Stomach (tissue), 19 donors: ENCODE measurements at regions of chr1 and their contacts with region 1.

Region 1: GRCh38 chr1:183023601-183024316 is 539 bp downstream of the LAMC1 start:
- DNase-seq: peak; percentile 85 to 92
- H3K4me3 ChIP-seq: peak overlapping the region; percentile 69 to 87 (median 80)
- H3K27ac ChIP-seq: peak overlapping the region; percentile 99 to 100 (median 99)
- H3K4me1 ChIP-seq: peaks cover 13 to 77% (median 46%) of the 10 kb centered on the region in 4 donors
- H3K27me3 ChIP-seq: peaks cover 0 to 8% (median 0%) of the 10 kb centered on the region in 3 donors
- CTCF ChIP-seq: peak in 4 of 7 experiments; percentile 45 to 80 (median 57)
- EP300 ChIP-seq: no peak
- POLR2A ChIP-seq: no peak

Region 2: DNA sequence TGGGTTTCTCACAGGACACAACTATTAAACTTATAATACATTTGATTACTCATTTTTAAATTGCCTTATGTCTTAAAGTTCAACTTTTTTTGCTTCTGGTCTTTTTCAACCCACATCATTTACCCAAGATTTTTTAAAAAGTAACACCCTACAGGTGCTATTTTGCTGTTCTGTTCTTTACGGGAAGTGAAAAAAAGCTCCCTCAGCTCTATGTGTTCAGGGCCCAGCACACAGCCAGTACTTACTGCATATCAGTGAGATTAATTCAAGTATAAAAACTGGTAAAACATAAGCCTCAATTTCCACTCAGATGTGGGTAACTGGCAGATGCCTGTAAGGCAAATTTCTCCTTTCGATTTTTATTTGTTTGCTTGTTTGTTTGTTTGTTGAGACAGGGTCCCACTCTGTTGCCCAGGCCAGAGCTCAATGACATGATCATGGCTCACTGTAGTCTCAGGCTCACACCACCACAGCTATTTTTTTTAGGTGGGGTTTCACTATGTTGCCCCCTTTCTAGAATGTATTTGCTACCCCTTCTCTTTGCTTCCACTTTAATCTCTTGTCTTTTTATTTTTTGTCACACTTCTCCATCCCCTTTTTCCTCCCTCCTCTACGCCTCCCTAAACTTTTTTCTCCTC is 455.0 kb before region 1 on chr1:
- intact Hi-C with region 1: no loop called
- DNase-seq: no peak
- H3K4me3 ChIP-seq: no peak overlapping the region
- H3K27ac ChIP-seq: no peak overlapping the region
- H3K4me1 ChIP-seq: no peaks in the 10 kb centered on the region
- H3K27me3 ChIP-seq: no peaks in the 10 kb centered on the region
- CTCF ChIP-seq: no peak
- EP300 ChIP-seq: no peak
- POLR2A ChIP-seq: no peak

Region 3: GRCh38 chr1:182841368-182841988 is 182.3 kb before region 1 on chr1:
- intact Hi-C with region 1: no loop called
- DNase-seq: peak in 1 of 2 donors; percentile 50
- H3K4me3 ChIP-seq: peak overlapping the region; percentile 65 to 87 (median 80)
- H3K27ac ChIP-seq: peak overlapping the region in 2 of 5 donors; percentile 97 to 98
- H3K4me1 ChIP-seq: peaks cover 21 to 68% (median 51%) of the 10 kb centered on the region in 4 donors
- H3K27me3 ChIP-seq: no peaks in the 10 kb centered on the region
- CTCF ChIP-seq: no peak
- EP300 ChIP-seq: no peak
- POLR2A ChIP-seq: no peak

Region 4: GRCh38 chr1:182962554-182963115 is 61.1 kb before region 1 on chr1:
- intact Hi-C with region 1: loop called (anchors 5 kb)
- DNase-seq: peak; percentile 78 to 94
- H3K4me3 ChIP-seq: peak overlapping the region in 1 of 4 donors; percentile 3
- H3K27ac ChIP-seq: peak overlapping the region in 4 of 5 donors; percentile 56 to 65 (median 62)
- H3K4me1 ChIP-seq: peaks cover 0 to 9% (median 2%) of the 10 kb centered on the region in 4 donors
- H3K27me3 ChIP-seq: no peaks in the 10 kb centered on the region
- CTCF ChIP-seq: peak in 5 of 7 experiments; percentile 72 to 91 (median 86)
- EP300 ChIP-seq: no peak
- POLR2A ChIP-seq: no peak

Region 5: GRCh38 chr1:183124259-183124658 is 100.5 kb after region 1 on chr1:
- intact Hi-C with region 1: no loop called
- DNase-seq: no peak
- H3K4me3 ChIP-seq: no peak overlapping the region
- H3K27ac ChIP-seq: peak overlapping the region in 1 of 5 donors; percentile 62
- H3K4me1 ChIP-seq: peaks cover 0 to 25% (median 13%) of the 10 kb centered on the region in 4 donors
- H3K27me3 ChIP-seq: no peaks in the 10 kb centered on the region
- CTCF ChIP-seq: no peak
- EP300 ChIP-seq: no peak
- POLR2A ChIP-seq: no peak